ENCODE measurements at regions of chr11 and their contacts with region 1.

Region 1: DNA sequence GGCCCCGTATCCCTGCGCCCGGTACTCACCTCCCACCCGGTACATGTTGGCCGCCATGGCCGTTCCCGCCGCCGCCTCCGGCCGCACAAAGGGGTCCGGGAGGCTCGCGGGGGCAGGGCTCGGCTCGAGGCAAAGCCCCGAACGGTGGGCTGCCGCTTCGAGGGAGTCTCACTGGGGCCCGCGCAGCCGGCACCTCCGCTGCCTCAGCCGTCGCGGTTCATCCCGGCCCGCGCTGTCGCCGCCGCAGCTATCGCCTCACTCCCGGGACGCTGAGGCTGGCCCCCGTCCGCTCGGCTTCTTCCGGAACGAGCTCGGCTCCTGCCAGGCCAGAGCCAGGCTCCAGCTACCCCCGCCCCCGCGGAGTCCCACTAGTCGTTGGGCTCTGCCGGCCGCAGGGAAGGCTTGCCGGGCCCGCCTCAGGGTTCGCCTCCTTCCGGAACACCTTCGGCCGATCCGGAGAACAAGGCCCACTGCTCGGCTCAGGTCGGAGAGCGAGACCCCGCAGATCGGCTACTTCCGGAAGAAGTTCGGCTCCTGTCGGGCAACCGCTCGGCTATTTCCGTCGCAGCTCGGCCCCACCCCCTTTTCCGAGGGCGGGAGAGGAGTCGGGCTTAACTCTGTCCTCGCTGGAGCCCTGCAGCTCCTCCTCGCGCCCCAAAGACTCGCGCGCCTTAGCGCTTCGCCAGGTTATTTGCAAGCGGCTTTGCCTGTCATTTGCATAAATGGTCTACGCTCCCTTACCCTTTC is at the start of gene MTA2:
- DNase-seq: peak; percentile 95 to 100 (median 99)
- ATAC-seq: peak; percentile 82 to 83
- H3K4me3 Mint-ChIP-seq: peak within 1 kb of the TSS; percentile 88 to 95 (median 92)
- H3K27ac Mint-ChIP-seq: peak within 1 kb of the TSS; percentile 93 to 97 (median 96)
- H3K4me1 Mint-ChIP-seq: peaks cover 37 to 66% (median 62%) of the 10 kb centered on the region in 4 donors
- H3K27me3 Mint-ChIP-seq: no peaks in the 10 kb centered on the region
- polyA plus RNA-seq, gene MTA2: 15.8 to 32.6 (median 21.5) TPM

Region 2: GRCh38 chr11:62004473-62004872 is 597.1 kb before region 1 on chr11:
- POLR2A ChIA-PET with region 1: no interaction called
- DNase-seq: no peak
- ATAC-seq: no peak
- H3K4me3 Mint-ChIP-seq: no peak overlapping the region
- H3K27ac Mint-ChIP-seq: peak overlapping the region in 1 of 10 donors; percentile 65
- H3K4me1 Mint-ChIP-seq: no peaks in the 10 kb centered on the region
- H3K27me3 Mint-ChIP-seq: peaks cover 0 to 4% (median 2%) of the 10 kb centered on the region in 5 donors

Region 3: DNA sequence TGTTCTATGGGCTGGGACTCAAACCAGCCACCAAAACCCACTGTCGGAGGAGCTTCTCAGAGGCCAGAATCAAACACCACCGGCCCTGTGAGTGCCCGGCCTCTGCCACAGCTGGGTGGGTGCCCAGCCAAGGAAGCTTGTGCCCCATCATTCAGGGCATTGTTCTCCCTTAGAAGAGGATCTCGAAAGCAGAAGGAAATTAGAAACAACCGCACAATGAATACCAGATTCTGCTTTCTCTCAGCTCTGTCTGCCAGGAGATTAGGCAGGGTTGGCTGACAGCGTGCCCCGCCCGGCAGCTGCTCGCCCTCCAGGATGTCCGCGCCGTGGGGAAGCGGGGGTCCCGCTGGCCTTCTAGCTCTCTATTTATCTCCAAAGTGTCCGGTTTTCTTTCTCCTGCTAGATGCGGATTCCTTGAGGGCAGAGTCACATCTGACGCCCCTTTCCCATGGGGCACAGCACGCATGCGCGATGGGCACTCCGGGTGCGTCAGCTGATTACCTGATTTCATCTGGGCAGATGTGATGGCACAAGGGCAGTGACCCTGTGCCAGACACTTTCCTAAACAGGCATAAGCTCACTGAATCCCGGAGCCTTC is 157.2 kb before region 1 on chr11:
- POLR2A ChIA-PET with region 1: no interaction called
- DNase-seq: peak in 6 of 10 donors; percentile 17 to 65 (median 26)
- ATAC-seq: peak in 1 of 2 donors; percentile 65
- H3K4me3 Mint-ChIP-seq: peak overlapping the region; percentile 63 to 83 (median 79)
- H3K27ac Mint-ChIP-seq: peak overlapping the region in 4 of 10 donors; percentile 33 to 84 (median 60)
- H3K4me1 Mint-ChIP-seq: peaks cover 2 to 26% (median 9%) of the 10 kb centered on the region in 4 donors
- H3K27me3 Mint-ChIP-seq: peaks cover 11 to 36% (median 32%) of the 10 kb centered on the region in 5 donors

Region 4: DNA sequence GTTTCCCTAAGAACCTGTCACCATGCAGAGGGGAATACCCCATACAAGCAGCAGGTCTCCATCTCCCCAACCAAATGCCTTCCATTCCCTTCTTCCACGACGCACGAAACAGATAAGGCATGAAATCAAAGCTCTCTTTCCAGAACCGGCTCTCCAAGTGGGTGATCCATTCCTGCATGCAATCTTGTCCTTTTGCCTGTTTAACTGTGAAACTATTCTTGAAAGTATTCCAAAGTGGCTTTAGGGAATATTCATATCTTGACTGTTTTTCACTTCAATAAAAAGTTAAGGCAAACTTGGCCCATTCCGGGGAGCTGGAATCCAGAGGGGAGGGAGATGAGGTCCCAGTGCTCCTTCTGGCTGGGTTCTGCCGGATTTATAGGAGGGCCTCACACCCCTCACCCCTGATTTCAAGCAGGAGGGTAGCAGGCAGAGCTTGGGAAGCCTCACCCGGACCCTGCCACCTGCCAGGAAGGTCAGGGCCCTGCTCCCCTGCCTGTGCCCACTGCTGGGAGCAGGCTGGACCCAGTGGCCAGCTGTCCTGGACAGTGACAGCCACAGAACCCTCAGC is 121.9 kb before region 1 on chr11:
- POLR2A ChIA-PET with region 1: no interaction called
- DNase-seq: no peak
- ATAC-seq: no peak
- H3K4me3 Mint-ChIP-seq: no peak overlapping the region
- H3K27ac Mint-ChIP-seq: no peak overlapping the region
- H3K4me1 Mint-ChIP-seq: no peaks in the 10 kb centered on the region
- H3K27me3 Mint-ChIP-seq: no peaks in the 10 kb centered on the region

Region 5: DNA sequence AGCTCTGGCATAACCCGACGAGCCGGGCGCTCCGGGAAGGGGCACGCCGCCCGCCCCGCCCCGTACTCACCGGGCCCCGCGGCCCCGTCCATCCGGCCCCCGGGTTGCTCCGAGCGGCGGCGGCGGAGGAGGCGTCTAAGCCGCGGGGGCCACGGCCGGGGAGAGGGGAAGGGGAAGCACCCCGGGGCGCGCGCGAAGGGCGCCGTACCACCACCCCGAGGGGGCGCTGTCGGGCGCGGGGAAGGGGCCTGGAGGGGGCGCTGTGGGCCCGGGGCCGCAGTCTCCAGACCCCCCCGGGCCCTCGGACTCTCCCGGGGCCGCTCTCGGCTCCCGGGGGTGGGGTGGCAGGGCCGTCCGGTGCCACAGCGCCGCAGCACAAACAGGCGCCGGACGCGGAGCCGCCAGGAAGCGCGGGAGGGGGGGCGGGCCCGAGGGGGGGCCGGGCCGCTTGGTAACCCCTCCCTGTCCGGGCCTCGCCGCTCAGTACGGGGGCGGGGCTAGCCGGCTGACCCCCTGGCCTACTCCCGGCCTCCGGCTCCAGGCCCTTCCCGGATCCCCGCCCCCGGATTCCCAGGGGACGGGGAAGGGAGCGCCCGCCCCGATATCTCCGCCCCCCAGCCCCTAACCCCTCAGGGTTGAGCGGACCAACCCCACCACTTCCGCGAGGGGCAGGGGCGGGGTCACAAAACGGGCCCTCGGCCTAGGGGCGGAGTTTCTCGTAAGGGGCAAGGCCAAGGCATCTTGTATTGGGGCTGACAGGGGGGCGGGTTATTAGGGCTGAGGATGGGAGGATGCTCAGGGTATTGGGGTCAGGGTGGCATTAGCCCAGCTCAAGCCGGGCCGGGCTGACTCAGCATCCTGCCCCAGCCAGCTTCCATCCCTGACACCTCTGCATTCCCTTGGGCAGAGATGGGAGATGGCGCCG is 11.1 kb after region 1 on chr11 and contains the starts of genes EML3 and ROM1:
- POLR2A ChIA-PET with region 1: interaction called, 83 read pairs
- DNase-seq: peak; percentile 79 to 94 (median 88)
- ATAC-seq: peak; percentile 74 to 78
- H3K4me3 Mint-ChIP-seq: peak within 1 kb of the TSS; percentile 91 to 98 (median 94)
- H3K27ac Mint-ChIP-seq: peak within 1 kb of the TSS; percentile 96 to 99 (median 98)
- H3K4me1 Mint-ChIP-seq: peaks cover 32 to 59% (median 57%) of the 10 kb centered on the region in 4 donors
- H3K27me3 Mint-ChIP-seq: no peaks in the 10 kb centered on the region
- polyA plus RNA-seq, gene EML3: 14.8 to 23.7 (median 15.7) TPM
- polyA plus RNA-seq, gene ROM1: 0.82 to 1.9 (median 1.8) TPM

Region 6: GRCh38 chr11:62645956-62646824 is 44.6 kb after region 1 on chr11 and contains the start of gene GANAB:
- POLR2A ChIA-PET with region 1: interaction called, 17 read pairs
- DNase-seq: peak; percentile 94 to 99 (median 97)
- ATAC-seq: peak; percentile 97 to 98
- H3K4me3 Mint-ChIP-seq: peak within 1 kb of the TSS; percentile 92 to 99 (median 97)
- H3K27ac Mint-ChIP-seq: peak within 1 kb of the TSS; percentile 90 to 99 (median 98)
- H3K4me1 Mint-ChIP-seq: peaks cover 9 to 50% (median 32%) of the 10 kb centered on the region in 4 donors
- H3K27me3 Mint-ChIP-seq: no peaks in the 10 kb centered on the region
- polyA plus RNA-seq, gene GANAB: 171 to 197 (median 174) TPM

Region 7: GRCh38 chr11:62671575-62672389 is 70.2 kb after region 1 on chr11 and contains the starts of genes LBHD1 and UQCC3:
- POLR2A ChIA-PET with region 1: interaction called, 14 read pairs
- DNase-seq: peak; percentile 52 to 85 (median 68)
- ATAC-seq: peak; percentile 75 to 76
- H3K4me3 Mint-ChIP-seq: peak within 1 kb of the TSS; percentile 96 to 100 (median 98)
- H3K27ac Mint-ChIP-seq: peak within 1 kb of the TSS; percentile 92 to 99 (median 96)
- H3K4me1 Mint-ChIP-seq: peaks cover 22 to 67% (median 50%) of the 10 kb centered on the region in 4 donors
- H3K27me3 Mint-ChIP-seq: no peaks in the 10 kb centered on the region
- polyA plus RNA-seq, gene LBHD1: 2.4 to 8.3 (median 4.4) TPM
- polyA plus RNA-seq, gene UQCC3: 9.1 to 9.7 (median 9.6) TPM

Measured in naive thymus-derived CD8-positive, alpha-beta T cell (primary cell).